ENCODE measurements at regions of chr4 and their contacts with region 1.

Region 1: DNA sequence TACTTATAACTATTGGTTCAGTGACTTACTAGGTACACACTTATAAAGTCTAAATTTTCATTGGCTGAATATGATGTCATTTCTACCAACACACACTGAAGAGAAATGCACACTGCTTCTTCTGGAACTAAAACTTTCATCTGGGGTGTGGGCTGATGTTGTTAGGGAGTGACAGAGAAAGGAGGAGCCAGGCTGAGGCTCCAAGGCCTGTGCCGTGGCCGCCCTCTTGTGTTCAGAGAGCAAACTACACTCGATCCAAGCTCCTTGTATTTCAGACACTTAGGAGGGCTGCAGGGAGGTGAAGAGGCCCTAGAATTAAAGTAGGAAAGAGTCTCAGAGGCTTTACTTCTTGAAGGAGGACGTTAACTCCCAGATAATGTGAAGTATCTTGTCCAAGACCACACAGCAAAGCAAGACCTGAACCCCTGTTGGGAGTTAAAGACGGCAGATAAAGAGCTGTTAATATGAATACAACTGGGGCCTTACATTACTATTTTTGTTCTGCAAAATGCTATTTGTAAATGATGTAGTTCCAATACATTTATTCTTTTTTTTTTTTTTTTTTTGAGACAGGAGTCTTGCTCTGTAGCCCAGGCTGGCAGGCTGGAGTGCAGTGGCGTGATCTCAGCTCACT is 137.5 kb downstream of the AFAP1 start:
- DNase-seq: peak; percentile 51
- H3K4me3 ChIP-seq: no peak overlapping the region
- H3K27me3 ChIP-seq: no peaks in the 10 kb centered on the region
- CTCF ChIP-seq: peak; percentile 93

Region 2: DNA sequence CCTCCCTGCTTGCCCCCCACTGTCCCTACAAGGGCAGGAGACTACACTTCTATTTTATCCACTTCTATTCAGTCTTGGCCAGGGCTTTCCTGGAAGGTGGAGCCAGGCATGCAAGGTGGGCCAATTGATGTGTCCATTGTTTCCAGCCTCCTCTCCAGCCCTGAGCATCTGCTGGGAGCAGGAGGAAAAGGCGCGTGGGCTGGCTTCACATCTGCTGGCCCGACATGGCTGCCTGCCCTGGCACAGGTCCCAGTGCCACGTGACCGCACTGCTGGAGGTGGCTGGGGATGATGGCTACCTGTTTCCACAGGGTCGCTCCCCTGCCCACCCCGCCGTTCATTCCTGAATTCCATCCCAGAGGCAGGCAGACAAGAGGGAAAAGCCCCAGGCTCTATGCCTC is 110.2 kb before region 1 on chr4:
- CTCF ChIA-PET with region 1: no interaction called
- POLR2A ChIA-PET with region 1: no interaction called
- DNase-seq: no peak
- H3K4me3 ChIP-seq: no peak overlapping the region
- H3K27me3 ChIP-seq: peaks cover 4% of the 10 kb centered on the region
- CTCF ChIP-seq: no peak

Region 3: DNA sequence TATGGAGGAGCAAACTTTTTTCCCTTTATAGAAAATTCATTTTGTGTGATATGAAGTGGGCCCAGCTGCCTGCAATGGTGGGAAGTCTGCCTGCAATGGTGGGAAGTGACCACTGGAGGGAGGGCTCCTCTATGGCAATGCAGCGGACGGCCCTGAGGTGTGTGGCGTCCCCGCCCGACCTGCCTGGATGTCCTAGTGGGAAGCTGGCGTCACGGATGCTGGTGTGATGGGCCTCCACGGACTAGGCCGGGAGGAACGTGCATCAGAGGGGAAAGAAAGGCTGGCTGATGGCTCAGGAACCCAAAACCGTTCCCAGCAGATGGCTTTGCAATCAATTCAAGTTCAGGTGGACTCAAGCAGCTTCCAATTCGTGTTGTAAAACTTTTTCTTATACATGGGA is 40.5 kb before region 1 on chr4:
- CTCF ChIA-PET with region 1: interaction called, 16 read pairs
- POLR2A ChIA-PET with region 1: no interaction called
- DNase-seq: no peak
- H3K4me3 ChIP-seq: no peak overlapping the region
- H3K27me3 ChIP-seq: no peaks in the 10 kb centered on the region
- CTCF ChIP-seq: peak; percentile 78

Region 4: GRCh38 chr4:7843831-7844593 is 41.8 kb after region 1 on chr4:
- CTCF ChIA-PET with region 1: interaction called, 13 read pairs
- POLR2A ChIA-PET with region 1: no interaction called
- DNase-seq: no peak
- H3K4me3 ChIP-seq: no peak overlapping the region
- H3K27me3 ChIP-seq: no peaks in the 10 kb centered on the region
- CTCF ChIP-seq: peak; percentile 62

Region 5: GRCh38 chr4:7929118-7929951 is 127.1 kb after region 1 on chr4:
- CTCF ChIA-PET with region 1: interaction called, 59 read pairs
- POLR2A ChIA-PET with region 1: no interaction called
- DNase-seq: no peak
- H3K4me3 ChIP-seq: no peak overlapping the region
- H3K27me3 ChIP-seq: no peaks in the 10 kb centered on the region
- CTCF ChIP-seq: peak; percentile 39

Region 6: DNA sequence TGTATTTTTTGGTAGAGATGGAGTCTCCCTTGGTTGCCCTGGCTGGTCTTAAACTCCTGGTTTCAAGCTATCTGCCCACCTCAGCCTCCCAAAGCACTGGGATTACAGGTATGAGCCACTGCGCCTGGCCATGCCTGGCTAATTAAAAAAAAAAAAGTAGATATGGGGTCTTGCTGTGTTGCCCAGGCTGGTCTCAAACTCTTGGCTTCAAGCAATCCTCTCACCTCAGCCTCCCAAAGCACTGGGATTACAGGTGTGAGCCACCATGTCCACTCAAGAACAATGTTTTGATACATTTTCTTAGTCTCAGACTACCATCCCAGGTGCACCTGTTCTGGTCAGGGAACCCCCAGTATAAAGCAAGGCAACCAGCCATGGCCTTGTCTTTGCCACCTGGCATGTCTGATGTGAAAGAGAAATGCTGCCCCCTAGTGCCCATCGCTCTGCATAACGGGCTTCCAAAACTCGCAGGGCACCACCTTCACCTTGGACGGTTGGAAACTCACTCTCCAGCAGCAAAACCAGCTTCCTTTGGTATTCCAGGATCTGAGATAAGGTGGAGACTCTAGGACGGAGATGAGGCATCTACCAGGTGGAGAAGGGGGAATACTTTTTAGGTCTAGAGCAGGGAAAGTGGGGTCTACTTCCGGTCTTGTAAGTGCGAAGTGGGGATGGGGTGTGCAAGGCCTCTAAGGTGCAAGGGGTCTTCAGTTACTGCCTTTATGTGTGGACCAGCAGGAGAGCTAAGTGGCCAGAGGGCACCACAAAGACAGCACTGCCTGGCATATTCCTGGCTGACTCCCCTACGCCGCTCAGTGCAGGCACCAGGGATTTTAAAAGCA is 185.2 kb after region 1 on chr4:
- CTCF ChIA-PET with region 1: interaction called, 151 read pairs
- POLR2A ChIA-PET with region 1: no interaction called
- DNase-seq: no peak
- H3K4me3 ChIP-seq: no peak overlapping the region
- H3K27me3 ChIP-seq: no peaks in the 10 kb centered on the region; the same call in 1 of the 2 replicates
- CTCF ChIP-seq: peak; percentile 87

Measured in BJ (cell line).